H1 (cell line): ENCODE measurements at regions of chr1 and their contacts with region 1.

Region 1: DNA sequence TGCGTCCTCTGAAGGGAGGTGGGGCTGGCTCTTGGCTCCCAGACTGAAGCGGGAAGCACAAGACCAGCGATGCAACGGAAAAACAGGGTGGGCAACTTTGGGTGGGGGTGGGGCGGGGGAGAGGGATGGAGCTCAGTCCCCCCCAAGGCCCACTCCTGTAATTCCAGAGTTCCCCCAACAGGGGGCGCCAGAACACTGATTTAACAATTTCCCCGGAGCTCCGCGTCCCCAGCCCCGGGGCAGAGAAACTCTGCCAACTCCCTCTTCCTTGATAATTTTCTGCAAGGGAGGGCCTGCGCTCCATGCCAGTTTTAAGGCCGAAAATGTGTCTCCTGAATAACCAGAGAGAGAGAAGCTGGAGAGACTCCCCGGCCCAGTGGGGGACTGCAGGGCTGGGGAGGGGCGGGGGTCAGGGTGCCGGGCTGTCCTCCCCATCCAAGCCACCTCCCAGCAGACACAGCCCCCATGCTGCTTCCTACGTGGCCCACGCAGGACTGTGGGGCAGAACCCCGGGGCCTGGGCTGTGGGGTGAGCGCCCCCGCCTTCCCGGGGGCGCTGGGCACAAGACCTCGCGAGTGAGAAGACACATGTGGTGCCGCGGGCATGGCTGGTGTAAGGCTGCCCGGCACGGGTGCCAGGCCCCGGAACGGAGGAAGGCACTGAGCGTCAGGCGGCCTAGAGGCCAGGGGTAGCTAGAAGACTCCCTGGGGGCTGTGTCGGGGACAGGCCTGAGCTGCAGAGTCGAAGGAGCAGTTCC is 51.4 kb downstream of the KIF21B start:
- DNase-seq: peak; percentile 27 to 90
- H3K4me3 ChIP-seq: no peak overlapping the region
- H3K27ac ChIP-seq: no peak overlapping the region
- H3K4me1 ChIP-seq: peaks cover 0 to 3% (median 0%) of the 10 kb centered on the region in 4 experiments; a peak in 1 of 7 replicates
- H3K27me3 ChIP-seq: no peaks in the 10 kb centered on the region
- CTCF ChIP-seq: peak; percentile 61 to 80 (median 68)
- EP300 ChIP-seq: no peak
- POLR2A ChIP-seq: no peak
- RAD21 ChIP-seq: peak; percentile 75 to 82

Region 2: GRCh38 chr1:200856716-200857352 is 115.3 kb before region 1 on chr1:
- CTCF ChIA-PET with region 1: no interaction called
- POLR2A ChIA-PET with region 1: no interaction called
- DNase-seq: no peak
- H3K4me3 ChIP-seq: no peak overlapping the region
- H3K27ac ChIP-seq: no peak overlapping the region
- H3K4me1 ChIP-seq: no peaks in the 10 kb centered on the region
- H3K27me3 ChIP-seq: no peaks in the 10 kb centered on the region
- CTCF ChIP-seq: no peak
- EP300 ChIP-seq: no peak
- POLR2A ChIP-seq: no peak
- RAD21 ChIP-seq: no peak

Region 3: DNA sequence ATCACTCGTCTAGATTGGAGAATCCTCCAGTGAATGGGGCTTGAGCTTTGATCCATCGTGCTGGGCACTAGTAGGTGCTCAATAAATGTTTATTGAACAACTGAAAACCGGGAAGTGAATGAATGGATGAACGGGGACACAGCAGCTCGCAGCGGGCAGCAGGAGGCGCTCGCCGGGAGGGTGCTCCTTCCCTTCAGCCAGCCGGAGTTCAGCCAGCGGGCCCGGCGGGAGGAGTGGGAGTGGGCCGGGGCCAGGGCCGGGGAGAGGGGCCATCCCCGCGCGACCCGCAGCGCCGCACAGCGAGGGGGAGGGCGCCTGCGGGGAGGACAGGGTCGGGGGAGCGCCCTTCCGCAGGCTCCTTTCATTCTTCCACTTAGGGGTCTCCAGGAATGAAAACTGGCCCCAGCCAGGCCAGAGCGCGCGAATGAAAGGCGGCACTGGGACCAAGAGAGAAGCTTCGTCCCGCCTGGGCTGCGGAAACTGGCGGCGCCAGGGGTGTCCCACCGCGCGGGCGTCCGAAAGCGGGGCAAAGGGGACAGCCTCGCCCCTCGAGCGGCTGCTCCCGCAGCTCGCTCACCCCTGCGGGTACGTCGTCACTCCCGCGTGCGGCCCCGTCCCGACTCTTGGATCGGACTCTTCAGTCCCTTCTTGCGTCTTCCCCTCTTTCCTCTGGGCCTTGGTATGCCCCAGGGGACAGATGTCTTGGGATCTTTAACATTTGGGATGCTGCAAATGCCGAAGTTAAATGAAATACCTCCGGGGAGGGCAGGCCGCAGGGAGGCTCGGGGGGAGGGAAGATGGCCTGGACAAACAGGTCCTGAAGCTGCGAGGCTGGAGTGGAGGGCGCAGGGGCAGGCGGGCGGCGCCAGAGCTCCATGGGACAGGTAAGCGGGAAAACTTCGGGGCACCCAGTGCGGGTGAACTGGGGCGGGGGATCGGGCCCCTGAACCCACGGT is 81.0 kb before region 1 on chr1:
- CTCF ChIA-PET with region 1: interaction called, 12 read pairs
- POLR2A ChIA-PET with region 1: interaction called, 3 read pairs
- DNase-seq: peak in 1 of 2 experiments; percentile 86
- H3K4me3 ChIP-seq: peak overlapping the region; percentile 67 to 90 (median 75)
- H3K27ac ChIP-seq: peak overlapping the region; percentile 99
- H3K4me1 ChIP-seq: peaks cover 15 to 49% (median 34%) of the 10 kb centered on the region in 4 experiments
- H3K27me3 ChIP-seq: no peaks in the 10 kb centered on the region
- CTCF ChIP-seq: peak; percentile 48 to 77 (median 73)
- EP300 ChIP-seq: peak in 1 of 2 experiments; percentile 96; a peak in 2 of 3 replicates
- POLR2A ChIP-seq: peak; percentile 58 to 82; a peak in 2 of 3 replicates
- RAD21 ChIP-seq: peak; percentile 42 to 53

Region 4: GRCh38 chr1:200959411-200959921 is 12.7 kb before region 1 on chr1:
- CTCF ChIA-PET with region 1: interaction called, 19 read pairs
- POLR2A ChIA-PET with region 1: interaction called, 5 read pairs
- DNase-seq: no peak
- H3K4me3 ChIP-seq: no peak overlapping the region
- H3K27ac ChIP-seq: no peak overlapping the region
- H3K4me1 ChIP-seq: peaks cover 0 to 3% (median under 1%) of the 10 kb centered on the region in 4 experiments; a peak in 2 of 7 replicates
- H3K27me3 ChIP-seq: no peaks in the 10 kb centered on the region
- CTCF ChIP-seq: no peak
- EP300 ChIP-seq: no peak
- POLR2A ChIP-seq: no peak
- RAD21 ChIP-seq: peak in 1 of 2 experiments; percentile 2; a peak in 1 of 4 replicates

Region 5: GRCh38 chr1:201009962-201010645 is 38.0 kb after region 1 on chr1:
- CTCF ChIA-PET with region 1: interaction called, 532 read pairs
- POLR2A ChIA-PET with region 1: interaction called, 3 read pairs
- DNase-seq: no peak
- H3K4me3 ChIP-seq: no peak overlapping the region
- H3K27ac ChIP-seq: 0 out of 2 replicates have a peak overlapping the region, but pooled peaks have one; percentile 26
- H3K4me1 ChIP-seq: peaks cover 0 to 17% (median 11%) of the 10 kb centered on the region in 4 experiments; a peak in 6 of 7 replicates
- H3K27me3 ChIP-seq: no peaks in the 10 kb centered on the region
- CTCF ChIP-seq: no peak
- EP300 ChIP-seq: no peak
- POLR2A ChIP-seq: no peak
- RAD21 ChIP-seq: no peak

Region 6: DNA sequence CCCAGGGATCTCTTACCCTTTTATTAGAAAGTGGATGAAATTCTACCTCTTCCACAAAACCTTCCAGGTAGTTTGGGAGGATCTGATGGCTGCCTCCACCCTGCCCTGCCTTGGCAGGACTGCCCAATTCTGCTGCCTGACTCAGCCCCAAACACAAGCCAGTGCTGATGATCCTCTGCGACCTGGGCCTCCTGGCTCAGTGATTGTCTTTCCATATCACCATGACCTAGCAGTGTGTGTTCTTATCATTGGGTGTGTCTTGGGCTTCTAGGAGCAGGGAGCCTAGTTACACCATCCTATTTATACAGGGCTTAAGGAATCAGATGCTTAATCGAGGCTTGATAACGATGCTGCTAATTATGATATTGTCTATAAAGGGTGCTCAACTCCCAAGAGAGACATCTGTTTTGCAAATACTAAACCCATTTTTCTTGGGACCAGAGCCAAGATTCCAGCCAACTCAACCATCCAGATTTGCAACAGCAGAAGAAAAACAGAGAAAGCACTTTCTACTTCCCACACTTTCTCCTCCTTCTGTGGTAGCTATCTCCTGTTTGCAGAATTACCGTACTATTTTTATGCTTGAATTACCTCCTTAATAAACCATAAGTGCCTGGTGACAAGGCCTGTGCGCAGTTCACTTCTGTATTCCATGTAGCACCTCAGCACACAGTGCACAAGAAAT is 87.9 kb after region 1 on chr1:
- CTCF ChIA-PET with region 1: interaction called, 640 read pairs
- POLR2A ChIA-PET with region 1: no interaction called
- DNase-seq: no peak
- H3K4me3 ChIP-seq: no peak overlapping the region
- H3K27ac ChIP-seq: no peak overlapping the region
- H3K4me1 ChIP-seq: peaks cover 0 to 18% (median 10%) of the 10 kb centered on the region in 4 experiments; a peak in 6 of 7 replicates
- H3K27me3 ChIP-seq: no peaks in the 10 kb centered on the region
- CTCF ChIP-seq: no peak
- EP300 ChIP-seq: no peak
- POLR2A ChIP-seq: no peak
- RAD21 ChIP-seq: no peak

Region 7: DNA sequence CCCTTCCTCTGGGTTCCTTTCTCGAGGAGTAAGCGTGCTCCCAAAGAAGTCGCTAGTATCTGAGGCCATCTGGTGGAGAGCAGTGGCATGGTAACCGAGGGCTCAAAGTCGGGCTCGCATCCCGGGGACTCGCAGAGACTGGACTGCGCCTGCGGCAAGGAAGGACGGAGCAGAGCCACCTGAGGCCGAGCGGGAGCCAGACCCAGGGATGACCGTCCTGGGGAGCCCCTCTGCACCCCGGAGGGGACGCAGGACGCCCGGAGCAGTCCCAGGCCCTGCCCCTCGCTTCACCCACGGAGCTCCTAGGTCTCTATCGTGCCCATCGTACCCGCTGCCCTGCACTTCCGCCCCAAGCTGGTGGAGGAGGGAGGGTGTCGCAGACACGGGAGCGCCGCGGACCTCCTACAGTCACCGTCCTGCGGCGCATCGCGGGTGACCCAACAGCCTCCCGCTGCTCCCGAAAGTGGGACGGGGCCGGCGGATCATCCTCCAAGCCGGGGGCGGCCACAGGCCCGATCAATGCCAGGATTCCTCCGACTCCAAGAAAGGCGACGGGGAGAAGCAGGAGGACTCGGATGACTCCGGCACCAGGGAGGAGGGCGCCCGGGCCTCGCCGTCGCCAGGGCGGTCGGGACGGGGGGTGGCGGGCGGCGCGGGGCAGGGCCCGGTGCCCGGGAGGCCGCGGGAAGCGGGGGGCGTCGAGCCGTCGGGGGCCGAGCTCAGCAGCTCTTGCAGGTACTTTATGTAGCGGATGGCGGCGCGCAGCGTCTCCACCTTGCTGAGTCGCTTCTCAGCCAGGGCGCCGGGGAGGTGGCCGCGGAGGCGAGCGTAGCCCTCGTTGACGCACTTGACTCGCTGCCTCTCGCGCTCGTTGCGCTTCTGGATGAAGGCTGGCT is 142.4 kb after region 1 on chr1:
- CTCF ChIA-PET with region 1: interaction called, 37 read pairs
- POLR2A ChIA-PET with region 1: no interaction called
- DNase-seq: peak; percentile 90 to 91
- H3K4me3 ChIP-seq: peak overlapping the region; percentile 30 to 72 (median 50)
- H3K27ac ChIP-seq: no peak overlapping the region
- H3K4me1 ChIP-seq: peaks cover 0 to 5% (median under 1%) of the 10 kb centered on the region in 4 experiments; a peak in 1 of 7 replicates
- H3K27me3 ChIP-seq: peaks cover 9 to 27% (median 21%) of the 10 kb centered on the region in 4 experiments
- CTCF ChIP-seq: peak; percentile 86 to 96 (median 95)
- EP300 ChIP-seq: no peak
- POLR2A ChIP-seq: peak in 1 of 2 experiments; percentile 77; a peak in 2 of 3 replicates
- RAD21 ChIP-seq: peak; percentile 95 to 99

Region 8: GRCh38 chr1:201137579-201138310 is 165.6 kb after region 1 on chr1:
- CTCF ChIA-PET with region 1: no interaction called
- POLR2A ChIA-PET with region 1: no interaction called
- DNase-seq: no peak
- H3K4me3 ChIP-seq: no peak overlapping the region
- H3K27ac ChIP-seq: no peak overlapping the region
- H3K4me1 ChIP-seq: no peaks in the 10 kb centered on the region
- H3K27me3 ChIP-seq: no peaks in the 10 kb centered on the region
- CTCF ChIP-seq: no peak
- EP300 ChIP-seq: no peak
- POLR2A ChIP-seq: no peak
- RAD21 ChIP-seq: no peak

Region 9: GRCh38 chr1:201295861-201296260 is 323.7 kb after region 1 on chr1:
- CTCF ChIA-PET with region 1: no interaction called
- POLR2A ChIA-PET with region 1: no interaction called
- DNase-seq: no peak
- H3K4me3 ChIP-seq: no peak overlapping the region
- H3K27ac ChIP-seq: no peak overlapping the region
- H3K4me1 ChIP-seq: peaks cover 0 to 3% (median 0%) of the 10 kb centered on the region in 4 experiments; a peak in 1 of 7 replicates
- H3K27me3 ChIP-seq: no peaks in the 10 kb centered on the region; a peak in 1 of 7 replicates
- CTCF ChIP-seq: no peak
- EP300 ChIP-seq: no peak
- POLR2A ChIP-seq: no peak
- RAD21 ChIP-seq: no peak